ENCODE measurements at regions of chr18 and their contacts with region 1.

Region 1: DNA sequence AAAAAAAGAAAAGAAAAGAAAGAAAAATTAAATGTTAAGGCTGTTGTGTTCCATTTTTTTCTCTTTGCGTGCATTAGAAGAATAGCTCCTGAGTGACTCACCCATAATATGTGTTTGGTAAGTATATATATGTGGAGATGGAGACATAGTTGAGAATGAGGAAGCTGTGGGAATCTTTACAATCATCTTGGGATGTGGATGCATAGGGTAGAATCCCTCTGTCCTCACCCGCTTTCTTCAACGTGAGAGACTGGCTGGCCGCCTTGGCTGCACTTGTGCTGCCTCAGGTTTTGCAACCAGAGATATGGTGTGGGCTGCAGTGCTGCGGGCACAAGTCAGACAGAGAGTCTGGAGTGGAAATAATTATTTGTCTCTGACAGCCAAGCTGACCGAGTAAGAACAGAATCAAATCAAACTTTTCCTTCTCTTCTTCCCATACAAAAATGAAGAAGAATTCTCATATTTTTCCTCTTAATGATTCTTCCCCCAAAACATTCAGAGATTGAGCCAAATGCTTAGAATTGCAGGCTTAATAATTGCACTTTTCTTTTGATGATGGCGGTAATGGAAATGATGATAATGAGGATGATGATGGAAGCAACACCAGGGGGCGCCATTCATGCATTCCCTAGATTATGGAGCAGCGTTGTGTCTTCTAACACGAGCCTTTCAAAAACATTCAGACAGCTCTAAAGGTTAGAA is 48.5 kb downstream of the SERPINB7 start:
- DNase-seq: peak; percentile 53
- H3K4me3 Mint-ChIP-seq: no peak overlapping the region
- H3K27ac Mint-ChIP-seq: no peak overlapping the region
- H3K4me1 Mint-ChIP-seq: no peaks in the 10 kb centered on the region
- H3K27me3 Mint-ChIP-seq: peaks cover 3% of the 10 kb centered on the region

Region 2: GRCh38 chr18:63476666-63477065 is 347.0 kb before region 1 on chr18 and contains the start of gene SERPINB5:
- CTCF ChIA-PET with region 1: no interaction called
- POLR2A ChIA-PET with region 1: no interaction called
- intact Hi-C with region 1: no loop called
- DNase-seq: no peak
- H3K4me3 Mint-ChIP-seq: no peak within 1 kb of the TSS
- H3K27ac Mint-ChIP-seq: no peak within 1 kb of the TSS
- H3K4me1 Mint-ChIP-seq: no peaks in the 10 kb centered on the region
- H3K27me3 Mint-ChIP-seq: peaks cover 11% of the 10 kb centered on the region
- total RNA-seq, gene SERPINB5: not detected

Region 3: GRCh38 chr18:63848159-63848558 is 24.5 kb after region 1 on chr18:
- CTCF ChIA-PET with region 1: interaction called, 26 read pairs
- POLR2A ChIA-PET with region 1: interaction called, 3 read pairs
- intact Hi-C with region 1: no loop called
- DNase-seq: no peak
- H3K4me3 Mint-ChIP-seq: no peak overlapping the region
- H3K27ac Mint-ChIP-seq: no peak overlapping the region
- H3K4me1 Mint-ChIP-seq: no peaks in the 10 kb centered on the region
- H3K27me3 Mint-ChIP-seq: peaks cover 11% of the 10 kb centered on the region